Caco-2 (cell line): ENCODE measurements at regions of chr2 and their contacts with region 1.

Region 1: GRCh38 chr2:119290859-119291587 is 67.4 kb downstream of the STEAP3 start:
- DNase-seq: peak; percentile 90 to 92
- H3K4me3 ChIP-seq: no peak overlapping the region
- H3K4me3 Mint-ChIP-seq: no peak overlapping the region
- H3K27ac Mint-ChIP-seq: no peak overlapping the region
- H3K4me1 ChIP-seq: no peaks in the 10 kb centered on the region
- H3K4me1 Mint-ChIP-seq: no peaks in the 10 kb centered on the region
- H3K27me3 ChIP-seq: no peaks in the 10 kb centered on the region
- H3K27me3 Mint-ChIP-seq: no peaks in the 10 kb centered on the region
- CTCF ChIP-seq: peak; percentile 95 to 98

Region 2: GRCh38 chr2:119011162-119011909 is 279.7 kb before region 1 on chr2:
- CTCF ChIA-PET with region 1: no interaction called
- POLR2A ChIA-PET with region 1: no interaction called
- intact Hi-C with region 1: loop called (anchors 1 kb)
- DNase-seq: peak; percentile 58 to 80
- H3K4me3 ChIP-seq: no peak overlapping the region
- H3K4me3 Mint-ChIP-seq: peak overlapping the region; percentile 24
- H3K27ac Mint-ChIP-seq: no peak overlapping the region
- H3K4me1 ChIP-seq: no peaks in the 10 kb centered on the region; the same call in 1 of the 2 replicates
- H3K4me1 Mint-ChIP-seq: peaks cover 11% of the 10 kb centered on the region
- H3K27me3 ChIP-seq: peaks cover 2% of the 10 kb centered on the region
- H3K27me3 Mint-ChIP-seq: peaks cover 10% of the 10 kb centered on the region
- CTCF ChIP-seq: peak; percentile 74 to 76

Region 3: DNA sequence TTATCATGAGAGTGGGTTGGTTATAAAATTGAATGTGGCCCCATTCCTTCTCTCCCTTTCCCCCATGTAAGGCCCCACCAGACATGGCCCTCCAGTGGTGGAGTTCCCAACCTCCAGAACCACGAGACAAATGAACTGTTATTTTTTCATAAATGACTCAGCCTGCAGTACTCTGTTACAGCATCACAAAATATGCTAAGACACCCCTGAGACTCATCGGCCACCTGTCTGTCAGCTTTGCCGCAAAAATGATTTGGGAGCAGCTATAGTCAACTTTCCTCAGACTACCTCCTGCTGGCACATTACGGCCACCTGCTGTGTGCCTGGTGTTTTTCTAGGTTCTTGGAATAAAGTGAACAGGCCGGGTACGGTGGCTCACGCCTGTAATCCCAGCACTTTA is 111.0 kb before region 1 on chr2:
- CTCF ChIA-PET with region 1: no interaction called
- POLR2A ChIA-PET with region 1: no interaction called
- intact Hi-C with region 1: loop called (anchors 5 kb)
- DNase-seq: no peak
- H3K4me3 ChIP-seq: no peak overlapping the region
- H3K4me3 Mint-ChIP-seq: no peak overlapping the region
- H3K27ac Mint-ChIP-seq: no peak overlapping the region
- H3K4me1 ChIP-seq: no peaks in the 10 kb centered on the region
- H3K4me1 Mint-ChIP-seq: no peaks in the 10 kb centered on the region
- H3K27me3 ChIP-seq: no peaks in the 10 kb centered on the region
- H3K27me3 Mint-ChIP-seq: no peaks in the 10 kb centered on the region
- CTCF ChIP-seq: no peak

Region 4: DNA sequence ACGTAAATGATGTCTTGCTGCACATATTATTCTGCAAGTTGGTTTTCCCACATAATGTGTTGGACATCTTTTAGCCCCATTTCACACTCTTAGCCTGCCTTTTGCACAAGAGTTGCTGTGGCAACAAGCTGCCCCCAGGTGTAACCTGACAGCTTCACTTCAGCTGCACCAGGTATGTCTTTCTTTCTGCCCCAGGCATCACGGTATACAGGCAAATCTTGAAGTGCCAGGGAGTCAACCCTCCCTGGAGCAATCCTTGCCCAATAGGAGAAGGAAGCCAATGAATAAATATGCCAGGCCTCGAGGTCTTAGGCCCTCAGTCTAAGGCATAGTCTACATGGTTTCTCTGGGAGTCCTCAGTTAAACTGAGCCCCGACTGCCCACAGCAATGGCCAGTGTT is 100.7 kb before region 1 on chr2:
- CTCF ChIA-PET with region 1: no interaction called
- POLR2A ChIA-PET with region 1: no interaction called
- intact Hi-C with region 1: no loop called
- DNase-seq: no peak
- H3K4me3 ChIP-seq: no peak overlapping the region
- H3K4me3 Mint-ChIP-seq: no peak overlapping the region
- H3K27ac Mint-ChIP-seq: no peak overlapping the region
- H3K4me1 ChIP-seq: no peaks in the 10 kb centered on the region
- H3K4me1 Mint-ChIP-seq: peaks cover 4% of the 10 kb centered on the region
- H3K27me3 ChIP-seq: no peaks in the 10 kb centered on the region
- H3K27me3 Mint-ChIP-seq: no peaks in the 10 kb centered on the region
- CTCF ChIP-seq: no peak

Region 5: DNA sequence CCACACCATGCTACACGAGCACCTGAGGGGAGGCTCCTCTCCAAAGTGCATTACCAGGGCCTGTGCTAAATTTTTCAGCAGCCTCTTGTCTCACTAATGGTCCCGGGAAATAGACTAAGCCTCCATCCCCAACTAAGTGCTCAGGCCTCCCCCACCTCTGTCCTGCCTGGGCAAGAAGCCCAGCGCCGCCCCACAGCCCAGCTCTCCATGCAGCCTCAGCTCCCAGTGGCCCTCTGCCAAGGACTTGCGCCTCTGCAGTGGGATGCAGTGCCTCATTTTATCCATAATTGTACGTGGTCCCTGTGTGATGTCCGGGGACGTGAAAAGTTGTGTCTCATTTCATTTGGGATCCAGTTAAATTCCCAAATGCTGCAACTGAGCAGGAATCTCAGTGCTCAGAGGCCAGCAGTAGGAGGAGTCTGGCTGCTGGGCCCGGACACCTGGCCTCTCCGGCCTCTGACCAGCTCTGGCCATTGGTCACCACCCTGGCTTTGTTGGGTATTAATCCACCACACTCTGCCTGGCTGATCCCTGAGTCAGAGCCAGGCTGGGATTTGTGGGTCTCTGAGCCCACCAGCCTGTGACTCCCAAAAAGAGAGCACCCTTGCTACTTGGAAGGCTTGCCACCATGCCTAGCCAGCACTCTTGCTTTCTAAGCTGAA is 78.8 kb before region 1 on chr2:
- CTCF ChIA-PET with region 1: no interaction called
- POLR2A ChIA-PET with region 1: no interaction called
- intact Hi-C with region 1: no loop called
- DNase-seq: no peak
- H3K4me3 ChIP-seq: no peak overlapping the region
- H3K4me3 Mint-ChIP-seq: no peak overlapping the region
- H3K27ac Mint-ChIP-seq: no peak overlapping the region
- H3K4me1 ChIP-seq: no peaks in the 10 kb centered on the region
- H3K4me1 Mint-ChIP-seq: no peaks in the 10 kb centered on the region
- H3K27me3 ChIP-seq: no peaks in the 10 kb centered on the region
- H3K27me3 Mint-ChIP-seq: no peaks in the 10 kb centered on the region
- CTCF ChIP-seq: no peak

Region 6: DNA sequence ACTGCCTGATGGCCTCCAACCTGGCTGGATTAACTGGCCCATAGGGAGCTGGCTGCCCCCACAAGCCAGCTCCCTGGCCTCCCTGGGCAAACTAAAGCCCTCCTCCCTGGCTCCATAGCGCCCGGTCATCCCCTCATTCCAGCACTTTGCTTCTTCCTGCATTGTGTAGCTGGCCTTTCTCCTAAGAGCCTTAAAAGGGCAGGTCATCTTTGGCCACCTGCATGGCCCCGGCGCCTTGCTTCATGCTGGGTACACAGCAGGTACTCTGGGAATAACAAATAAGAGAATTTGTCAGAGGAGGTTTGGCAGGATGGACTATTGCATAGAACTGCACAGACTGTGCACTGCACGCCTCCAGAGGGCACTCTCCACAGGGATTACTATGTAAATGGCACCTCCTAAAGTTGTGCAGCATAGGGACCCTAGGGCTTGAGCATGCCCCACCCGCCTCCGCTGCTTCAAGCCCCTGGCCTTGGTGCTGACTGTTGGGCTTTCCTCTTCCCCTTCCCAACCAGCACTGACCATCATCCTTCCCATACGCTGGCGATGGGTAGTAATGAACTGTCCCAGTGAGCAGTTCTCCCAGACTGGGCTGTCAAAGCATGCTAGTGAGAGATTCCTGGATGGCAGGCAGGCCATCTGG is 56.5 kb before region 1 on chr2:
- CTCF ChIA-PET with region 1: interaction called, 3 read pairs
- POLR2A ChIA-PET with region 1: no interaction called
- intact Hi-C with region 1: loop called (anchors 1 kb)
- DNase-seq: peak; percentile 63 to 71
- H3K4me3 ChIP-seq: no peak overlapping the region
- H3K4me3 Mint-ChIP-seq: no peak overlapping the region
- H3K27ac Mint-ChIP-seq: no peak overlapping the region
- H3K4me1 ChIP-seq: peaks cover 16% of the 10 kb centered on the region
- H3K4me1 Mint-ChIP-seq: peaks cover 32% of the 10 kb centered on the region
- H3K27me3 ChIP-seq: no peaks in the 10 kb centered on the region
- H3K27me3 Mint-ChIP-seq: no peaks in the 10 kb centered on the region
- CTCF ChIP-seq: peak; percentile 25 to 49

Region 7: DNA sequence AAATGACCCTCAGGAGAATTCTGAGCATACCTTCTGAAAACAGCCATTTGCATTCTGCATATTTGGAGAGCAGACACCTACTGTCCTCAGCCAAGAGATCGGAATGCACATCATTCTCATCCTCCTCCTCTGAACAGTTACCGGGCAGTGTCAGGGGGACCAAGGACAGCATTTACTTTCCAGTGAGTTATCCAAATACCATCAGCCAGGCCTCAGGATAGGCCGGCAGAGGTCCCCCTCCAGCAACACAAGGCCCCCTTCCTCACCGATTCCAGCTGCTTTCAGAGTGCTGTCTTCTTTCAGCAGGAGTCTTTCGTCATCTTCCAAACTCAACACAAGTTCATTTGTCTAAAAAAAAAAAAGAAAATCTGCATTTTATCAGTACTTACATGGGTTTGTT is 20.3 kb after region 1 on chr2:
- CTCF ChIA-PET with region 1: interaction called, 3 read pairs
- POLR2A ChIA-PET with region 1: no interaction called
- intact Hi-C with region 1: loop called (anchors 1 kb)
- DNase-seq: peak in 1 of 2 experiments; percentile 33
- H3K4me3 ChIP-seq: no peak overlapping the region
- H3K4me3 Mint-ChIP-seq: no peak overlapping the region
- H3K27ac Mint-ChIP-seq: no peak overlapping the region
- H3K4me1 ChIP-seq: peaks cover 17% of the 10 kb centered on the region; the same call in 1 of the 2 replicates
- H3K4me1 Mint-ChIP-seq: peaks cover 23% of the 10 kb centered on the region
- H3K27me3 ChIP-seq: no peaks in the 10 kb centered on the region
- H3K27me3 Mint-ChIP-seq: no peaks in the 10 kb centered on the region
- CTCF ChIP-seq: peak in 1 of 2 experiments; percentile 37

Region 8: GRCh38 chr2:119782308-119783027 is 491.4 kb after region 1 on chr2:
- CTCF ChIA-PET with region 1: no interaction called
- POLR2A ChIA-PET with region 1: no interaction called
- intact Hi-C with region 1: no loop called
- DNase-seq: no peak
- H3K4me3 ChIP-seq: no peak overlapping the region
- H3K4me3 Mint-ChIP-seq: no peak overlapping the region
- H3K27ac Mint-ChIP-seq: no peak overlapping the region
- H3K4me1 ChIP-seq: no peaks in the 10 kb centered on the region
- H3K4me1 Mint-ChIP-seq: peaks cover 7% of the 10 kb centered on the region
- H3K27me3 ChIP-seq: no peaks in the 10 kb centered on the region
- H3K27me3 Mint-ChIP-seq: no peaks in the 10 kb centered on the region
- CTCF ChIP-seq: no peak

Region 9: GRCh38 chr2:120210262-120210693 is 919.3 kb after region 1 on chr2:
- CTCF ChIA-PET with region 1: no interaction called
- POLR2A ChIA-PET with region 1: no interaction called
- intact Hi-C with region 1: no loop called
- DNase-seq: no peak
- H3K4me3 ChIP-seq: no peak overlapping the region
- H3K4me3 Mint-ChIP-seq: no peak overlapping the region
- H3K27ac Mint-ChIP-seq: no peak overlapping the region
- H3K4me1 ChIP-seq: no peaks in the 10 kb centered on the region
- H3K4me1 Mint-ChIP-seq: no peaks in the 10 kb centered on the region
- H3K27me3 ChIP-seq: no peaks in the 10 kb centered on the region
- H3K27me3 Mint-ChIP-seq: no peaks in the 10 kb centered on the region
- CTCF ChIP-seq: no peak